A549 (cell line): ENCODE measurements at regions of chr5 and their contacts with region 1.

Region 1: GRCh38 chr5:116557669-116558271 is 16.9 kb downstream of the SEMA6A start:
- DNase-seq: peak; percentile 17 to 33
- ATAC-seq: peak; percentile 73 to 74; a peak in 4 of 6 replicates
- H3K4me3 ChIP-seq: no peak overlapping the region
- H3K27ac ChIP-seq: no peak overlapping the region
- H3K4me1 ChIP-seq: no peaks in the 10 kb centered on the region
- CTCF ChIP-seq: peak; percentile 69
- EP300 ChIP-seq: no peak
- POLR2A ChIP-seq: no peak
- RAD21 ChIP-seq: peak; percentile 60 to 61; a peak in 4 of 5 replicates

Region 2: GRCh38 chr5:116492016-116492623 is 65.7 kb before region 1 on chr5:
- CTCF ChIA-PET with region 1: no interaction called
- POLR2A ChIA-PET with region 1: no interaction called
- DNase-seq: no peak
- ATAC-seq: no peak
- H3K4me3 ChIP-seq: no peak overlapping the region
- H3K27ac ChIP-seq: no peak overlapping the region
- H3K4me1 ChIP-seq: no peaks in the 10 kb centered on the region
- CTCF ChIP-seq: no peak
- EP300 ChIP-seq: no peak
- POLR2A ChIP-seq: no peak
- RAD21 ChIP-seq: no peak

Region 3: DNA sequence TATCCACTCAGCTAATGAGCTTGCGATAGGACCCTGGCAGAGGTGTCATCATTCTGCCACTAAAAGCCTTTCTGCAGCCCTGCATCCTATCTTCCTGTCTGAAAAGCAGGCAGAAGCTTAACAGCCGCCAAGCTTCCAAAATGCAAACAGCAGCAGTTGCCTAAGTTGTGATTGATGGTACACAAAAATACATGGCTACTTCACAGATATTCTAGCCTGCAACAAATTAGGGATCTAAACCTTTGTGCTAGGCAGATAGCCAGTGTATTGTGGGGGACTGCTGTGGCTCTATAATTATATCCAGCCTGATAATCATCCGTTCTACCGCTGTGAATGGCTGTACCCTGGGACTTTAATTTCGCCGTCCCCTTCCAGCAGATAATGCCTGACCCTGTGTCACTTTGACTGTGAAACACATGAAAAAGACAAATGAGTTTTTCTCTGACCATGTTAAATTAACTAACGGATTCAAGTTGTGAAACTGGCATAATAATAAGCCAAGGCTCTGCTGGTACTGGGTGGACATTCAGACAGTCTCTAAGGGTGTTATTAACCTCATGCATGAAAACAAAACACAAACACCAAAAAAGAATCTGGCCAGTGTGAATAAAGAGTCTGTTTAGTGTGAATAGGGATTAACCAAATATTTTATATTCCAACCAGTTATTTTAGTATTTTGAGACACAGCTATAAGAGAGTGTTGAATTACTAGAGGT is 29.1 kb before region 1 on chr5:
- CTCF ChIA-PET with region 1: no interaction called
- POLR2A ChIA-PET with region 1: no interaction called
- DNase-seq: no peak
- ATAC-seq: no peak
- H3K4me3 ChIP-seq: no peak overlapping the region
- H3K27ac ChIP-seq: no peak overlapping the region
- H3K4me1 ChIP-seq: no peaks in the 10 kb centered on the region
- CTCF ChIP-seq: no peak
- EP300 ChIP-seq: no peak
- POLR2A ChIP-seq: no peak
- RAD21 ChIP-seq: no peak

Region 4: GRCh38 chr5:116543499-116543898 is 14.3 kb before region 1 on chr5:
- CTCF ChIA-PET with region 1: interaction called, 11 read pairs
- POLR2A ChIA-PET with region 1: no interaction called
- DNase-seq: no peak
- ATAC-seq: no peak
- H3K4me3 ChIP-seq: no peak overlapping the region
- H3K27ac ChIP-seq: no peak overlapping the region
- H3K4me1 ChIP-seq: no peaks in the 10 kb centered on the region
- CTCF ChIP-seq: no peak
- EP300 ChIP-seq: no peak
- POLR2A ChIP-seq: no peak
- RAD21 ChIP-seq: no peak

Region 5: GRCh38 chr5:116583085-116583861 is 25.5 kb after region 1 on chr5:
- CTCF ChIA-PET with region 1: no interaction called
- POLR2A ChIA-PET with region 1: no interaction called
- DNase-seq: no peak
- ATAC-seq: no peak
- H3K4me3 ChIP-seq: no peak overlapping the region
- H3K27ac ChIP-seq: no peak overlapping the region
- H3K4me1 ChIP-seq: no peaks in the 10 kb centered on the region
- CTCF ChIP-seq: no peak
- EP300 ChIP-seq: no peak
- POLR2A ChIP-seq: no peak
- RAD21 ChIP-seq: no peak